Mammary epithelial cell (primary cell): ENCODE measurements at regions of chr22 and their contacts with region 1.

Region 1: DNA sequence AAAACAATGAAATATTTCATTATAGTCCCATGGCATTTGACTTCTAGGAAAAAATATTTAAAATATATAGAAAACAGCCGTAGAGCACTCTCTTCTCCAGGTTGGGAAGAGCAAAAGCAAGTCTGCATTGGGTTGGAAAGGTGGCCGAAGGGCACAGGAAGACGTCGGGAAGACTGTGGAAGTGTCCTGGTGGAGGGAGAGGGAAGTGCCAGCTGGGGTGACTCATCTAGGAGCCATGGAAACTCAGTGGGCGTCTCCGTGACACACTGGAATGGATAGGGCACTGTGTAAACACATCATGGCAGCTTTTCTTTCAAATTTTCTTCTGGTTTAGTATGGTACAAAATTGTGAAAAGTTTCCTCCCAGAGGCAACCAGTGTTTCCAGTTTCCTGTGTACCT is 12.7 kb downstream of the GTPBP1 start:
- DNase-seq: peak; percentile 76
- H3K4me3 ChIP-seq: no peak overlapping the region
- H3K27ac ChIP-seq: peak overlapping the region; percentile 52
- H3K4me1 ChIP-seq: peaks cover 11% of the 10 kb centered on the region
- H3K27me3 ChIP-seq: no peaks in the 10 kb centered on the region
- CTCF ChIP-seq: peak; percentile 72 to 82

Region 2: GRCh38 chr22:38513063-38513462 is 205.4 kb before region 1 on chr22:
- CTCF ChIA-PET with region 1: no interaction called
- dilution Hi-C with region 1: no loop called
- in situ Hi-C with region 1: no loop called
- intact Hi-C with region 1: no loop called
- DNase-seq: no peak
- H3K4me3 ChIP-seq: no peak overlapping the region
- H3K27ac ChIP-seq: no peak overlapping the region
- H3K4me1 ChIP-seq: no peaks in the 10 kb centered on the region
- H3K27me3 ChIP-seq: no peaks in the 10 kb centered on the region
- CTCF ChIP-seq: peak in 1 of 2 donors; percentile 17

Region 3: GRCh38 chr22:38649841-38650522 is 68.4 kb before region 1 on chr22:
- CTCF ChIA-PET with region 1: no interaction called
- dilution Hi-C with region 1: no loop called
- in situ Hi-C with region 1: no loop called
- intact Hi-C with region 1: no loop called
- DNase-seq: peak; percentile 94
- H3K4me3 ChIP-seq: no peak overlapping the region
- H3K27ac ChIP-seq: no peak overlapping the region
- H3K4me1 ChIP-seq: peaks cover 7% of the 10 kb centered on the region
- H3K27me3 ChIP-seq: no peaks in the 10 kb centered on the region
- CTCF ChIP-seq: no peak

Region 4: GRCh38 chr22:38705235-38706100 is 12.9 kb before region 1 on chr22 and contains the start of gene GTPBP1:
- CTCF ChIA-PET with region 1: interaction called, 3 read pairs
- dilution Hi-C with region 1: no loop called
- in situ Hi-C with region 1: no loop called
- intact Hi-C with region 1: loop called (anchors 1 kb)
- DNase-seq: peak; percentile 100
- H3K4me3 ChIP-seq: peak within 1 kb of the TSS; percentile 73 to 93 (median 84)
- H3K27ac ChIP-seq: peak within 1 kb of the TSS; percentile 86
- H3K4me1 ChIP-seq: peaks cover 32% of the 10 kb centered on the region
- H3K27me3 ChIP-seq: no peaks in the 10 kb centered on the region
- CTCF ChIP-seq: peak in 1 of 2 donors; percentile 14
- total RNA-seq, gene GTPBP1: 23.0 to 47.4 TPM

Region 5: GRCh38 chr22:38733329-38733723 is 14.9 kb after region 1 on chr22:
- CTCF ChIA-PET with region 1: interaction called, 11 read pairs
- dilution Hi-C with region 1: no loop called
- in situ Hi-C with region 1: no loop called
- intact Hi-C with region 1: no loop called
- DNase-seq: no peak
- H3K4me3 ChIP-seq: no peak overlapping the region
- H3K27ac ChIP-seq: no peak overlapping the region
- H3K4me1 ChIP-seq: peaks cover 13% of the 10 kb centered on the region
- H3K27me3 ChIP-seq: no peaks in the 10 kb centered on the region
- CTCF ChIP-seq: peak; percentile 63 to 87

Region 6: DNA sequence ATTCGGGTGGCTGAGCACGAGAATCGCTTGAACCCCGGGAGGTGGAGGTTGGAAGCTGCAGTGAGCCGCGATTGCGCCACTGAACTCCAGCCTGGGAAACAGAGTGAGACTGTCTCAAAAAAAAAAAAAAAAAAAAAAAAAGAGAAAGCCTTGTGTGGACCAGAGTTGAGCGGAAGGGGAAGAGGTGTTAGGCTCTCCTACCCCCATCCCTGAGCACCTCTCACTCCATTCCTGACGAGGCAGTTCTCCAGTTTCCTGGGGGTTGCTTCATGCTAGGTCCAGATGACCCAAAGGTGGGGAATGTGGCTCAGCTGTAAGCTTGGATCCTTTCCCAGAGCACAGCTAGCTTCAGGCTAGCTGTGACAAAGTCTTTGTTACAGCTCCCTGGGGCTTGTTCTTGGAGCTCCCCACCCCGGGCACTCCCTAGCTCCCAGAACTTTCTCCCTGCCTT is 84.3 kb after region 1 on chr22:
- CTCF ChIA-PET with region 1: no interaction called
- dilution Hi-C with region 1: no loop called
- in situ Hi-C with region 1: no loop called
- intact Hi-C with region 1: no loop called
- DNase-seq: peak; percentile 97
- H3K4me3 ChIP-seq: no peak overlapping the region
- H3K27ac ChIP-seq: peak overlapping the region; percentile 20
- H3K4me1 ChIP-seq: peaks cover 7% of the 10 kb centered on the region
- H3K27me3 ChIP-seq: no peaks in the 10 kb centered on the region
- CTCF ChIP-seq: no peak